ENCODE measurements at regions of chrX and their contacts with region 1.

Region 1: GRCh38 chrX:119574394-119575266 is at the start of gene UBE2A:
- DNase-seq: peak; percentile 96
- H3K4me3 ChIP-seq: peak within 1 kb of the TSS; percentile 58 to 71 (median 68)
- H3K27ac ChIP-seq: peak within 1 kb of the TSS; percentile 89 to 96 (median 92)
- H3K4me1 ChIP-seq: peaks cover 0 to 15% (median 10%) of the 10 kb centered on the region in 4 donors
- H3K27me3 ChIP-seq: no peaks in the 10 kb centered on the region
- CTCF ChIP-seq: peak in 2 of 4 experiments; percentile 12 to 47
- EP300 ChIP-seq: no peak
- POLR2A ChIP-seq: peak; percentile 56 to 79
- total RNA-seq, gene UBE2A: 26.7 to 51.7 (median 43.1) TPM

Region 2: DNA sequence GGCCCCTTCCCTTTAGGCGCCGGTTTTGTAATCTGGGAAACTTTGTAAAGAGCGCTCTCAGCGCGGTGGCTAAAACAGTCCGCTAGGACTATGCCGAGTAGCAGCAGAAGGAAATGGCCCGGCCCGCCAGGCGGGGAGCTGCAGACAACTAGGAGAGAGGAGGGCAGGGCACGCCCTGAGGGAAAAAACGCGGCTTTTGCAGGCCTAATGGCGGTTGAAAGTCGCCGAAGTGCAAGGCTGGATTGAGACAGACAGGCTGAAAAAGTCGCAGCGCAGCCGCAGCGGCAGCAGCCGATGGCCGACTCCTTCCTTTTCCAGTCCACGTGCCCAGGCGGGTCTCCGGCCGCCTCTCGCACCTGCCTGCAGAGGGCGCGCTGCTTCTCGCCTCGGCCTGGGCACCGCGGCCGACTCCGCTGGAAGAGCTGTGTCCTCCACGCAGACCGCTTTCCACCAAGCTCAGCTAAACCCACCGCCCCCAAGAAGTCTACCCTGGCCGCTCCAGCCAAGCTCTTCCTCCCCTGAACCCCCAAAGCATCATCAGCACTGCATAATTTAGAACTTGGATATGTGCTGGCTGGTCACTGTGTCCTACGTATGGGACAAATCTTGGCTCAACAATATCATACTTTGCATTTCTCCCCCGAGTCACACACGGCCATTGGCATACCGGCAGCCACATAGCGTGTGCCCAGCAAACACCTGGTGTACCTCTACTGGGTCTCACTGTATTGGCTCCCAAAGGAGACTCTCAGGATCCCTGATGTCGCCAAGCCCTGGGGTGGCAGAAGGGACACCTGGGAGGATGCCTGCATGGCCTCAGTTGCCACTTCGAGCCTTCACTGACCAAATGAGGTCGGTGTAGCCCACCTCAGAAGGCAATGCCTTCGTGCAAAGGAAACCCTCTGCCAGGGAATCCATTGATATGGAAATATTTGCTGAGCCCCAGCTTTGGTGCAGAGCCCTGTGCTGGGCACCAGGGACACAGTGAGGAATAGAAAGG is 91.8 kb before region 1 on chrX:
- intact Hi-C with region 1: loop called (anchors 10 kb)
- DNase-seq: peak; percentile 74
- H3K4me3 ChIP-seq: peak overlapping the region; percentile 14 to 48 (median 44)
- H3K27ac ChIP-seq: peak overlapping the region; percentile 58 to 68 (median 63)
- H3K4me1 ChIP-seq: peaks cover 0 to 8% (median 0%) of the 10 kb centered on the region in 4 donors
- H3K27me3 ChIP-seq: no peaks in the 10 kb centered on the region
- CTCF ChIP-seq: peak; percentile 29 to 69 (median 36)
- EP300 ChIP-seq: no peak
- POLR2A ChIP-seq: no peak

Measured in sigmoid colon (tissue), 7 donors.